Activated CD4-positive, alpha-beta memory T cell treated with anti-CD3 and anti-CD28 coated beads for 36 hours (primary cell): ENCODE measurements at regions of chr2 and their contacts with region 1.

Region 1: DNA sequence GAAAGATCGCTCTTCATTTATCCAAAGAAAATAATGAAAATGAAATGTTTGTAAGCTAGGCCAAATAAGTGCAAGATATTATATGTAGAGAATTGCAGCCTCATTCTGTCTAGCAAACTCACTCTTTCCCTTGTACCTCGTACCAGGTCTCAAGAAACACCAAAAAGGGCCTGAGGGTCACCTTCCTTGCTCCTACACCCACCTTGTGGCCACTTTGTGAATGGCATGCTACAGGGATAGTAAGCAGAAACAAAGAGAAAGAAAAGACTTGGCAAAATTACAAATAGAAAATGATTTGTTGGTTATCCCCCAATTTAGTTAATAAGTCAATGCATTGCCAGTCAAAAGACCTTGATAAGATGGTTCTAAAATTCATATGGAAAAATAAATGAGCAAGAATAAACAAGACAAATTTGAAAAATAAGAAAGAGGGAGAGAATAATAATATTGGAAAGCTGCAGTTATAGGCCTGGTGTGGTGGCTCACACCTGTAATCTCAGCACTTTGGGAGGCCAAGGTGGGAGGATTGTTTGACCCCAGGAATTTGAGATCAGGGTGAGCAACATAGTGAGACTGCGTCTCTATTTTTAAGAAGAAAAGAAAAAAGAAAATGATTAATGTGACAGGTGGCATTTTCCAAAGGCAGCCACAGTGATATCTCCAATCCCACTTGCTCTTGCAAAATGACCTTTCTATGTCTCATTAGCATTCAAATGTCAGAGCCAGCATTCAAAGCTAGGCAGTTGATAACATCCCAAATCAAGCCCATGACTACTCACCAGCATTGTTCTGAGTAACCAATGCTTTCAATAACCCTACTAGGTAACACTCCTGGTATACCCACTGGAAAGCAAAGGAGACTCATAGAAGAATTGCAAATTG is 38.8 kb upstream of the BMP10 start:
- DNase-seq: peak; percentile 85
- H3K4me3 Mint-ChIP-seq: no peak overlapping the region
- H3K27ac Mint-ChIP-seq: peak overlapping the region; percentile 78
- H3K4me1 Mint-ChIP-seq: peaks cover 36% of the 10 kb centered on the region
- H3K27me3 Mint-ChIP-seq: no peaks in the 10 kb centered on the region

Region 2: DNA sequence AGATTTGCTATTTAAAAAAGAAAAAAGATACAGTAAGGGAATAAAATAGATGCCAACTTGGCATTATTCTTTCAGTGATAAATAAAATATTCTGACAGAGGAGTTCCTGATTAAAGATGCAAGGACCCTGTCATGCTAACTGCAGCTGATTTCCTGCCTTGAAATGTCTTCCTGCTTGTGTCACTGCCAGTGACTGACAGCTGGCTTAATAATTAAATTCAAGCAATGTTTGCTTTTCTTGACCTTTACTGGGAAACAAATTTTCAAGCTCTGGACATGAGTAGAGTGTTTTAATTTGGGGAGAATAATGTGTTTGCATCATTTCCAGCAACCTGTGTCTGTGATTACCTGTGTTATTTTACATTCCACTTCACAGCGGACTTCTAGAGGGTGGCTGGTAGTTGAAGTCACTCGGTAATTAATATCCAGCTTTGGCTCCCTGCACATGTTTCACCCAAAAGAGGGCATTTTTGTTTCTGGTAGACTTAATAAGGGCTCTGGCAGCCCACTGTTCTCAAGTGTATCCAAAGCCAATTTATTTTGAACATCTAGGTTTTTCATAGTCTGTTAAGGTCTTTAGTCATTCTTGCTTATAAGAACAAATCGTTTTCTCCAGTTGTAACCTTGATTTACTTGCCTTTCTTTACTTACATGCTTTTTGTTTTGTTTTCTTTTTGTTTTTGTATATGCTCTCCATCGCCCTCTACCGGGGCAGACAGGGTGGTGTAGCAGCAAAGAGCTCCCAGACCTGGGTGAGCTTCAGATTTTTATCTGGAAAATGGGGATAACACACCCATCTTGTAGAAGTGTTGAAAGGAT is 315.2 kb before region 1 on chr2:
- CTCF ChIA-PET with region 1: interaction called, 9 read pairs
- POLR2A ChIA-PET with region 1: no interaction called
- intact Hi-C with region 1: loop called (anchors 10 kb)
- DNase-seq: peak; percentile 62
- H3K4me3 Mint-ChIP-seq: no peak overlapping the region
- H3K27ac Mint-ChIP-seq: no peak overlapping the region
- H3K4me1 Mint-ChIP-seq: peaks cover 8% of the 10 kb centered on the region
- H3K27me3 Mint-ChIP-seq: peaks cover 2% of the 10 kb centered on the region

Region 3: DNA sequence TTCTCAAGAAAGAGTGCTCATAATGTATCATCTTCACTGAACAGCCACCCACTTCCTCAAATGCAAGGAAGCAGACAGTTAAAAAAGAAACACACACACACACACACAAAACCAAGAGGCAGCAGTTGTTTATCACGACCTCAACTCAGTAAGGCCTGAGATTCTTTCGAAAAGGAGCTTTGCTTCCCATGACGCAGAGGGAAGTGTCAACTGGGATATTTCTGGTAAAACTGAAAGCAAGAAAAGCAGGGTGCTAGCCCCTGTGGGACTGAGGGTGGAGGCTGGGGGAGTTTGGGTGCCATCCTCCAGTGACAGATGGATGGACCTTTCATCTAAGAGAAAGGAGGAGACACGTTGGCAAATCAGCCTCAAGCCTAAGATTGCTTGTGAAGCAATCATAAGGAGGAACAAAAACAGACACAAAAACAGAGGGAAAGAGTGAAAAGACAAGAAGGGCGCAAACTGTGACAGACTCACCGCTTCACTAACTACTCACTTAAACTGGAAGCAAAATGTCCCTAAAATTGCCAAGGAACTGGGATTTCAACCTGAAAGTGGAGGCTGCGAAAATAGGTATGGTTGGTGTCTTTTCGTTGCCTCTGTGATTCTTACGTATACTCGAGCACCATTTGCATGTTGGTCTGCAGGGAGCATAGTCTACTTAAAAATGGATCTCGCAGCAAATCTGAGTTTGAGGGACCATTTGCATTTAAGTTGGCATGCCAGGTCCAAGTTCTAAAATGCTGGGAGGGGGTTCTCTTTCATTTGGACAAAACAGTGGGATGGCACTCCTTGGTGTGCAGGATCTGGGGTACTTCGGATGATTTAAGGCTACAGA is 175.1 kb before region 1 on chr2 and contains the start of gene ARHGAP25:
- CTCF ChIA-PET with region 1: interaction called, 10 read pairs
- POLR2A ChIA-PET with region 1: interaction called, 14 read pairs
- intact Hi-C with region 1: no loop called
- DNase-seq: peak; percentile 87
- H3K4me3 Mint-ChIP-seq: no peak within 1 kb of the TSS
- H3K27ac Mint-ChIP-seq: no peak within 1 kb of the TSS
- H3K4me1 Mint-ChIP-seq: peaks cover 36% of the 10 kb centered on the region
- H3K27me3 Mint-ChIP-seq: no peaks in the 10 kb centered on the region
- total RNA-seq, gene ARHGAP25: 79.8 to 87.7 TPM

Region 4: DNA sequence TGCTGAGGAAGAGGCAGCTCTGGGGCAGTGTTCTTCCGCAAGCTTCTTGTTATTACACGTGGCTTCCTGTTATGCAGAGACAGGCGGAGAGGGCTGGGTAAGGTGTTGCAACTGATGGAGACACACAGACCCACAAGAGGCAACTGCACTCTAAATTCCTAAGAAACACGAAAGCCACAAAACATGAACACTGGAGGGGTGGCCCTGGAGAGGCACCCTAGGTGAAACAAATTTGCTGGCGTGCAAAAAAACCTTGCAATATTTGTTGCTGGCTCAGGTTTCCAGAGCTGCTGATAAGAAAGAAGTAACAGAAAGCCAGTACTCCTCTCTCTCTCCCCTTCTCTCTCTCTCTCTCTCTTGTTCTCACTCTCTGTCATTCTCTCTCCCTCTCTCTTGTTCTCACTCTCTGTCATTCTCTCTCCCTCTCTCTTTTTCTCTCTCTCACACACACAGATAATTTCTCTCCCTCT is 143.6 kb before region 1 on chr2:
- CTCF ChIA-PET with region 1: interaction called, 5 read pairs
- POLR2A ChIA-PET with region 1: interaction called, 5 read pairs
- intact Hi-C with region 1: loop called (anchors 1 kb)
- DNase-seq: peak; percentile 81
- H3K4me3 Mint-ChIP-seq: peak overlapping the region; percentile 76
- H3K27ac Mint-ChIP-seq: peak overlapping the region; percentile 98
- H3K4me1 Mint-ChIP-seq: peaks cover 96% of the 10 kb centered on the region
- H3K27me3 Mint-ChIP-seq: no peaks in the 10 kb centered on the region

Region 5: GRCh38 chr2:68925295-68925896 is 15.4 kb after region 1 on chr2:
- CTCF ChIA-PET with region 1: interaction called, 32 read pairs
- POLR2A ChIA-PET with region 1: interaction called, 6 read pairs
- intact Hi-C with region 1: no loop called
- DNase-seq: peak; percentile 57
- H3K4me3 Mint-ChIP-seq: no peak overlapping the region
- H3K27ac Mint-ChIP-seq: no peak overlapping the region
- H3K4me1 Mint-ChIP-seq: peaks cover 6% of the 10 kb centered on the region
- H3K27me3 Mint-ChIP-seq: no peaks in the 10 kb centered on the region